T-cell (primary cell): ENCODE measurements at regions of chr21 and their contacts with region 1.

Region 1: GRCh38 chr21:29849735-29850176 is 90.0 kb downstream of the GRIK1 start:
- DNase-seq: peak in 31 of 35 experiments; percentile 1 to 58 (median 21)
- ATAC-seq: peak; percentile 79 to 82 (median 80)
- H3K4me3 ChIP-seq: no peak overlapping the region
- H3K4me3 Mint-ChIP-seq: no peak overlapping the region
- H3K27ac ChIP-seq: no peak overlapping the region
- H3K27ac Mint-ChIP-seq: no peak overlapping the region
- H3K4me1 ChIP-seq: no peaks in the 10 kb centered on the region
- H3K4me1 Mint-ChIP-seq: no peaks in the 10 kb centered on the region
- H3K27me3 ChIP-seq: no peaks in the 10 kb centered on the region
- H3K27me3 Mint-ChIP-seq: peaks cover 4 to 8% of the 10 kb centered on the region in 2 donors

Region 2: DNA sequence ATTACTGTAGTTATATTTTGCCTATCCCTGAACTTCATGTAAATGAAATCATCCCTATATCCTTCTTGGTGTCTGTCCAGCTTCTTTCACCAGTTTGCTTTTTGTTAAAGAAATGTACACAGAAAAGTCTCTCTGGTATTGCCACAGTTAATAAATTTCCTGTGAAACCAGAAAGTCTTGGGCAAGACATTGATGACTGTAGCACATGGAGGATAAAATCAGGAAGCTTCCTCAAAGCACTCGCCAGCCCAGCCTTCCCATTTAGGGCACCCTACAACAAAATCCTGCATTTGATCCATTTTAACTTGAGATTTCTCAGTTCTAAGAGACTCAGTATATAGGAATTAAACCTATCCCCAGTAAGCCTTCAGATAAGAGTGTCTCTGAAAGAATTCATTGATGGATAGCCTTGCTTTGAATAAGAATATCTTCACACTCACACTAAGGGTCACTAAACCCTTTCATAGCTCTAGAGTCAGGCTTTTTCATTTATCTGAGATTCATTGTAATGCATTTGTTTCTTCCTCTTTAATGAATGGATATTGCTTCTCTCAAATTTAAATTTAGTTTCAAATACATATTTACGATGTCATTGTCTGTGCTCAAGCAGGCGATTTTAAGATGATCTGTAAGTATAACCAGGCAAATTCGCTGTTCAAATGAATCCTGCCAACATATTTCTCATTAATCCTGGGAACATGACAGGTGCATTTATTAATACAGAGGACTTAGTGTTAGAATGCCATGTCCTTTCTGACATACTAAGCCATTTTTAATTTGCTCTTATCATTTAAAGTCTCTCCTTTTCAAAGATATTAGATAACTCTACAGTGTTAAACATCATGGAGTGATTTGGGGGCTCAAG is 63.0 kb before region 1 on chr21:
- CTCF ChIA-PET with region 1: no interaction called
- POLR2A ChIA-PET with region 1: no interaction called
- DNase-seq: no peak
- ATAC-seq: no peak
- H3K4me3 ChIP-seq: no peak overlapping the region
- H3K4me3 Mint-ChIP-seq: no peak overlapping the region
- H3K27ac ChIP-seq: no peak overlapping the region
- H3K27ac Mint-ChIP-seq: no peak overlapping the region
- H3K4me1 ChIP-seq: no peaks in the 10 kb centered on the region
- H3K4me1 Mint-ChIP-seq: no peaks in the 10 kb centered on the region
- H3K27me3 ChIP-seq: no peaks in the 10 kb centered on the region
- H3K27me3 Mint-ChIP-seq: peaks cover 0 to 3% of the 10 kb centered on the region in 2 donors

Region 3: DNA sequence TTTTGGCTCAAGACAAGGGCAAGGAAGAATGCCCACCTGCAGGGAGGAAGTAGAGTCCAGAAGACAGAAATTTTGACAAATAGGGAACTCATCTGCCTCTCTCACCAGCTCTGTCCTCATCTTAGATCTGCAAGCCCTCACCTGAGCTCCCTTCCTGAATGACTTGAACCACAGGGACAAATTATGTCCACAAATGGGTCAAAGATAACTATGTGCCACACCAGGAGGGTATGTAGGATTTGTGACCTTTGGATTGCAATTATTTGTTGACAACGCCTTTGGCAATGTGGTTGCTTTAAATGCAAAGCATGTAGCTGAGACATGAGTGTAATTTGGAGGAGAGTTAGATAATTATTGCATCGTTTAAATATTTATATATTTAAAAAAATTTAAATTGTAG is 10.6 kb after region 1 on chr21:
- CTCF ChIA-PET with region 1: interaction called in 1 of 2 experiments, 11 read pairs
- POLR2A ChIA-PET with region 1: no interaction called
- DNase-seq: no peak
- ATAC-seq: no peak
- H3K4me3 ChIP-seq: no peak overlapping the region
- H3K4me3 Mint-ChIP-seq: no peak overlapping the region
- H3K27ac ChIP-seq: no peak overlapping the region
- H3K27ac Mint-ChIP-seq: no peak overlapping the region
- H3K4me1 ChIP-seq: no peaks in the 10 kb centered on the region
- H3K4me1 Mint-ChIP-seq: no peaks in the 10 kb centered on the region
- H3K27me3 ChIP-seq: no peaks in the 10 kb centered on the region
- H3K27me3 Mint-ChIP-seq: peaks cover 2 to 8% of the 10 kb centered on the region in 2 donors

Region 4: GRCh38 chr21:29875036-29875716 is 25.4 kb after region 1 on chr21:
- CTCF ChIA-PET with region 1: no interaction called
- POLR2A ChIA-PET with region 1: no interaction called
- DNase-seq: no peak
- ATAC-seq: no peak
- H3K4me3 ChIP-seq: no peak overlapping the region
- H3K4me3 Mint-ChIP-seq: no peak overlapping the region
- H3K27ac ChIP-seq: no peak overlapping the region
- H3K27ac Mint-ChIP-seq: no peak overlapping the region
- H3K4me1 ChIP-seq: no peaks in the 10 kb centered on the region
- H3K4me1 Mint-ChIP-seq: no peaks in the 10 kb centered on the region
- H3K27me3 ChIP-seq: no peaks in the 10 kb centered on the region
- H3K27me3 Mint-ChIP-seq: peaks cover 0 to 23% of the 10 kb centered on the region in 2 donors

Region 5: DNA sequence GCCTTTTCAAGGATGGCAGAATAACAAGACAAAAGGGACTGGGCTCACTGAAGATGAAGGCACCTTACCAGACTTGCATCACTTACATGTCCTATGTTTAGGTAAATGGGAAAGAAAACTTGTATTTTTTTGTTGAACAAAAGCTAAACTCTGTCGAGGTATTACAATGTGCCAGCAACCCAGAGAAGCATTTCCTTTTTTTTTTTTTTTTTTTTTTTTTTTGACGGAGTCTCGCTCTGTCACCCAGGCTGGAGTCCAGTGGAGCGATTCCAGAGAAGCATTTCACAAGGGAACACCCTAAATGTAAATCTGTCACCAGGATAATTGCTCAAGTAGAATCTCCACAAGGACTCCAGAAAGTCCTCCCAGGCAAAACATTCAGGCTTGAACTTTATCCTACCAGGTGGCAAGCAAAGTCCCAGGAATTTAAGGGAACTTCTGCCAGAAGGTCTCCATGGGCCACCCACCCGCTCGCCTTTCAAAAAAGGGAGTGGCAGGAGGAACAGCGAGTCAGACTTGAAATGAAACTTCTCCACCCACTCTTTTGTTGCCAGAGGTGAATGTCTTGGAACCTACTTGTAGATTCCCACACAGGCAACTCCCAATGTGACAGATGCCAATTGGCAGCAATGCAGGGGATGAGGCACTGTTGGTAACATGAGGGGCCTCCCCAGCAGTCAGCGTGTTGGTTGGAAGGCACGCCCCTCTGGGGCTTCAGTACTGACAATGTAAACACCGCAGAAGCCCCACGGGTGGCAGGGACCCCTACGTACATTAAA is 1369.3 kb after region 1 on chr21:
- CTCF ChIA-PET with region 1: no interaction called
- POLR2A ChIA-PET with region 1: no interaction called
- DNase-seq: no peak
- ATAC-seq: no peak
- H3K4me3 ChIP-seq: no peak overlapping the region
- H3K4me3 Mint-ChIP-seq: no peak overlapping the region
- H3K27ac ChIP-seq: no peak overlapping the region
- H3K27ac Mint-ChIP-seq: no peak overlapping the region
- H3K4me1 ChIP-seq: no peaks in the 10 kb centered on the region
- H3K4me1 Mint-ChIP-seq: peaks cover 0 to 3% (median 0%) of the 10 kb centered on the region in 3 donors
- H3K27me3 ChIP-seq: no peaks in the 10 kb centered on the region
- H3K27me3 Mint-ChIP-seq: no peaks in the 10 kb centered on the region